GM18951 (cell line): ENCODE measurements at regions of chr5 and their contacts with region 1.

Region 1: DNA sequence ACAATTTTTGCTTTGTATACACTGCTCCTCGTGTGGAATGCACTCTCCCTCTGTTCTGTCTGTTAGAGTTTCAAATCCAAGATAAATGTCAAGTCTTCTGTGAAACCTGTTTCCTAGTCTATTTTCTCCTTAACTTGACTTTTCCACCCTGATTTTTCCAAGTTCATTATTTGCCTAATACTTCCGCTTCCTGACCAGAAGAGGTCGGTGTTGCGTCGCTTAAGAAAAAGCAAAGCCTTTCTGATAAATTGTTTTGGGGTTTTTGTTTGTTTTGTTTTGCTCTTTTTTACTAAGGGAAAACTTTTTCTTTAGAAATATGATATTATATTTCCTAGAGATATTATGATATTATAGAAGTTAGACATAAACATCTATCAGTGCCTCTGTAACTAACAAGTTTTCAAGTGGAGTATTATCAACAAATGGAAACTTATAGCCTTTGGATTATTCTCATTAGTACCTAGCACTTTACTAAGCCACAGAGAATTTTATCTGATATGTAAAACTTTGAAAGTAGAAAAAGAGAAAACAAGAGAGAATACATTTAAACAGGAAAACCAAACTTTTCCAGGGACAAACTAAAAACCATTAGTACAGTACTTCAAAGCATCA is 55.8 kb downstream of the PHAX start:
- POLR2A ChIP-seq: no peak

Region 2: DNA sequence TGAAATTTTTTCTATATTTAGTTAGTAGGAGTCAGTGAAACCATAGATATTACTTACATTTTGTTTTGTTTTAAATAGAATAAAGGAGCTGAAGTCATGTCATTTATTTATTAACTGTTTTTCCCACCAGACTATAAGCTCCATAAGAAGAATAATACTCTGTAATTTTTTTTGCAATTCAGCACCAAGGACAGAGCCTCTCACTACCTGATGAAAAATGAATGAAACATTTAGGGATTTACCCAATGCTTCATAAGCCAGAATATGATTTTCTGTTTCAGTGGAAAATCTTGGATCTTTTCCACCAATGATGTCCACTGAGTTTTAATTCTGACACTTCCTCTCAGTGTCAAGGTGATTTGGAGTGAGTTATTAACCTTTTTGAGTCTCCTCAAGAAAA is 858.2 kb before region 1 on chr5:
- in situ Hi-C with region 1: no loop called
- POLR2A ChIP-seq: no peak

Region 3: GRCh38 chr5:126884269-126884819 is 227.8 kb after region 1 on chr5:
- in situ Hi-C with region 1: no loop called
- POLR2A ChIP-seq: no peak

Region 4: GRCh38 chr5:127313847-127314473 is 657.5 kb after region 1 on chr5:
- in situ Hi-C with region 1: loop called (anchors 25 kb)
- POLR2A ChIP-seq: no peak